ENCODE measurements at regions of chr2 and their contacts with region 1.

Region 1: DNA sequence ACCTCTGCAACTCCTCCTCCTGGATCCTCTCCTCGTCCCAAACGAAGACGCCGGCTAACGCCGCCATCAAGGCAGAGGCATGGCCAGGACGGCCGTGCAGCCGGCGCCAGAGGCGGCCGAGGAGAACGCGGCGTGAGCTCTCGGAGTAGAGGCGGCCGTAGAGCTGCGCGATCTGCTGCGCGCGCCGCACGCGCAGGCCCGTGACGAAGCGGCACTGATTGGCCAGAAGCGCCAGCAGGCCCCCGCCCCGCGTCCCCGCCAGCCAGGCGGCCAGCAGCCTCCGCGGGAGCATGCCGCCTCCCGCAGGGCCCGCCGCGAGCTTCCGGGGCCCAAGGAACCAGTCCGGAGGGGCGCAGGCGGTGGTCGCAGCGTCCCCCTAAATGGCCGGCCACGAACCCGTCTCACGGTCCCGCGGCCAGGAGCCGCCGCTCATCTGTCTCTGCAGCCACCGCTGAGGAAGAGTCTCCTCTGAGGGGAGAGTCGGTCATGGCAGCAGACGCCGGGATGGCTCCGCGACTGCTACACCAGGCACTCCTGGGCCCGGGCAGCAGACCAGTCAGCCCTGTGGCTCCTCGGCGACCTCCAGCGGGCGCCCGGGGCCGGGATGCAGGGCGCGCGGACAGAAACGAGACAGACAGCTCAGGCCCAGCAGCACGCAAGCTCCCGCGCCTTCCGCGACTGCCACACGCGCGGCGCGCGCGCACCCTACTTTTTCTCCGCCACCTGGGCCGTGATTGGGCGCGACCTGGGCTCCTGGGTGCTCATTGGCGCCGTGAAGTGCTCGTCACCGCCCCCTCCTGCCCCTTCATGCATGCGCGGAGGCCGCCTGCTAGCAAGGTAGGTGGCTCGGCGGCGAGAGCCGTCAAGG is at the start of gene STARD7:
- DNase-seq: peak; percentile 99
- ATAC-seq: peak; percentile 94
- H3K4me3 Mint-ChIP-seq: peak within 1 kb of the TSS; percentile 100
- H3K27ac Mint-ChIP-seq: peak within 1 kb of the TSS; percentile 96
- H3K4me1 Mint-ChIP-seq: peaks cover 45% of the 10 kb centered on the region
- H3K27me3 Mint-ChIP-seq: no peaks in the 10 kb centered on the region
- total RNA-seq, gene STARD7: 151 to 173 TPM

Region 2: DNA sequence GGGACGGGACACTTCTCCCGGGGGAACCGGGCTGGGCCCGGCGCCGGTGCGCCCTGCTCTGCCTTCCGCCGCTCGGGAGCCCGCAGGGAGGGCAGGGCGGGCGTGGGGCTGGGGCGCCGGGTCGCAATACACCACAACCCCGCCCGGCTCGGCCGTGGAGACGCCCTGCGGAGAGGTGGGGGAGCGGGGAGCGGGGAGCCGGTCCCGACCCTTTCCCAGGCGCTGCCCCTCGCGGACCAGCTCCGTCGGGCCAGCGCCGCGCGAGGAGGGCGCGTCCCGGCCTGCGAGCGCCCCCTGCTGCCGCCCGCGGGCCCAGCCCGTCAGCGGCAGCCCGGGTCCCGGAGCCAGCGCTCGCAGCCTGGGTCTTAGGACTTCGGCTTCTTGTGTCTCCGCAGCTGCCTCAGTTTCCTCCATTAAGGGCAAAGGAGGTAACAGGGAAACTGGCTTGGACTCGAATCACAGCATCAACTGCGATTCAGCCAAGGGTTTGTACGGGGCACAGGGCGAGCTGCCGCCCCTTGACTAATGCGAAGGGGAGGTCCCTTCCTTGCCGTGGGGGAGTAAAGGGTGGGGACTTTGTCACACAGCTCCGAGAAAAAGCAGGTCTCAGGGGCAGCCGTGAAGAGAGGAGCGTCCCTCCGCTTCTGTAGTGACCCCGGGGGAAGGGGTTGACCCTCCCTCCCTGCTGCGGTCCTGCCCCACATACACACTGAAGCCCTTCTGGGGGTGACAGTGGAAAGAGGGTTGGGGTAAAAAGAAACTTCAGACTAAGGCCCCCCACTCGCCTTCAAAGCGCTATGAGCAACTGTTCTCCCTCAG is 91.3 kb before region 1 on chr2:
- CTCF ChIA-PET with region 1: interaction called, 3 read pairs
- POLR2A ChIA-PET with region 1: interaction called, 3 read pairs
- intact Hi-C with region 1: loop called in 1 of 2 experiments (anchors 1 kb)
- DNase-seq: peak; percentile 80
- ATAC-seq: peak; percentile 87
- H3K4me3 Mint-ChIP-seq: peak overlapping the region; percentile 55
- H3K27ac Mint-ChIP-seq: no peak overlapping the region
- H3K4me1 Mint-ChIP-seq: peaks cover 10% of the 10 kb centered on the region
- H3K27me3 Mint-ChIP-seq: peaks cover 36% of the 10 kb centered on the region

Region 3: DNA sequence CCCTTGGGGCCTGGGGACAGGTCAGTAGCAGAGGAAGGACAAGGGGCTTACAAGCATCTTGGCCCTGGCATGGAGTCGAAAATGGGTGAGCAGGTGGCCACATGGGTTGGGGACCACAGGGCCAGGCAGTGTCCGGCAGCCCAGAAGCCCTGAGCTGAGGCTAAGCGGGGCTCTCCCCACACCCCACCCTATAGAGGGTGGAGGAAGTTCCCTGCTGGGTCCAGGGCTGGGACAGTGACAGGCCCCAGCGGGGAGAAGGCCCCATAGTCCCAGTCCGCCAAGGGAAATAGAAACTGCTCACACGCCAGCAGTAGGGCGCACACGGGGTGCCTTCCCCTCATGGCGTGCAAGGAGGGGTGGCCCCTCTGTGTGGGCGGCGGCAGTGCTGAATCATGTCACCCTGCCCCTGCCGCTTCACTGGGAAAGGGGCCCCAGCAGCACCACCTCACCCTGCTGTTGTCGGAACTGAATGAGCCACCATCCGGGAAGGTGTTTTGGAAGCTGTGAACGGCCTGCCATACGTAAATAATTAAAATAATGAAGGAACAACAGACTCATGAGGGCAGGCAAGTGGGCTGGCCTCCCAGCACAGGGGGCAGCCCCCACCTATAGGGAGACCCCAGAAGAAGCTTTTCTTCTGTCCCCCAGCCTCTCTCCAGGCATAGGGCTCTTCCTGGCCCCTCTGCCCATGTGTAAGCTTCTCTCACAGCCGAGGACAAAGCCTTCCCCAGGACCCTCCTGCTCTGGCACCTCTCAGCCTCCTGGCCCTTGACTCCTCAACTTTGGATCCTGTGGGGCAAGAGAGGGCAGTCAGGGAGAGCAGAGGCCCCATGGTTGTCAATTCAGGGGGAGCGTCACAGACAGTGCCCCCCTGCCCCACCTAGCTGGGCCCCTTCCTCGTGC is 50.5 kb before region 1 on chr2:
- CTCF ChIA-PET with region 1: no interaction called
- POLR2A ChIA-PET with region 1: no interaction called
- intact Hi-C with region 1: loop called in 1 of 2 experiments (anchors 1 kb)
- DNase-seq: peak; percentile 99
- ATAC-seq: peak; percentile 79
- H3K4me3 Mint-ChIP-seq: peak overlapping the region; percentile 61
- H3K27ac Mint-ChIP-seq: peak overlapping the region; percentile 98
- H3K4me1 Mint-ChIP-seq: peaks cover 90% of the 10 kb centered on the region
- H3K27me3 Mint-ChIP-seq: no peaks in the 10 kb centered on the region

Region 4: GRCh38 chr2:96241900-96242611 is 33.7 kb after region 1 on chr2:
- CTCF ChIA-PET with region 1: interaction called, 5 read pairs
- POLR2A ChIA-PET with region 1: no interaction called
- intact Hi-C with region 1: loop called in 1 of 2 experiments (anchors 1 kb)
- DNase-seq: peak; percentile 78
- ATAC-seq: peak; percentile 94
- H3K4me3 Mint-ChIP-seq: peak overlapping the region; percentile 13
- H3K27ac Mint-ChIP-seq: peak overlapping the region; percentile 91
- H3K4me1 Mint-ChIP-seq: peaks cover 45% of the 10 kb centered on the region
- H3K27me3 Mint-ChIP-seq: no peaks in the 10 kb centered on the region

Region 5: DNA sequence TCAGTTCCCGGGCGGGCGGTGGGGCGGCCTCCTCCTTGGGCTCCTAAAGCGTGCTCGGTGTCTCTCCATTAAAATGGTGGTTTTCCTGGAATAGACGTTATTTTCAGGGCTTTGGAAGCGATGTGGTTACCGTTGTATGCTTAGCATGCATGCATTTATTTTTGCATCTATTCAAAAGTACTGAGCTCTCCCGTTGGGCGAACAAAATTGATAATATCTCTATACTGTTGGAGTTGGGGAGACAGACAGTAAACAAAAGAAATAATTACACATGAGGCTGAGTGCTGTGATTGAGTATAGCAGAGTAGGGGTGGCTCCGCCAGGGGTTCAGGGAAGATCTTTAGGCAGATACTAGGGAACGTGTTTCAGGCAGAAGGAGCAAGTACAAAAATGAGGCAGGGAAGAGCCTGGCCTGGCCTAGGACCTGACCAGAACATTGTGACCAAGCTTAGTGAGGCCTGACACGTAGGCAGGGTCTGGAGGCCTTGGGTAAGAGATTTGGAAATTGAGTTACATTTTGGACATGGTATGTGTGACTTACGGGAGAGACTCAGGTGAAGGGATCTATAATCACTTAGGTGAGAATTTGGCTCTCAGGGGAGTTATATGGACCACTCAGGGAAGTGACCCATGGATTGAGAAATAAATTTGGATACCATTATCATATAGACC is 127.9 kb after region 1 on chr2:
- CTCF ChIA-PET with region 1: no interaction called
- POLR2A ChIA-PET with region 1: interaction called, 8 read pairs
- intact Hi-C with region 1: loop called in 1 of 2 experiments (anchors 1 kb)
- DNase-seq: no peak
- ATAC-seq: no peak
- H3K4me3 Mint-ChIP-seq: peak overlapping the region; percentile 88
- H3K27ac Mint-ChIP-seq: peak overlapping the region; percentile 85
- H3K4me1 Mint-ChIP-seq: peaks cover 47% of the 10 kb centered on the region
- H3K27me3 Mint-ChIP-seq: no peaks in the 10 kb centered on the region

Region 6: DNA sequence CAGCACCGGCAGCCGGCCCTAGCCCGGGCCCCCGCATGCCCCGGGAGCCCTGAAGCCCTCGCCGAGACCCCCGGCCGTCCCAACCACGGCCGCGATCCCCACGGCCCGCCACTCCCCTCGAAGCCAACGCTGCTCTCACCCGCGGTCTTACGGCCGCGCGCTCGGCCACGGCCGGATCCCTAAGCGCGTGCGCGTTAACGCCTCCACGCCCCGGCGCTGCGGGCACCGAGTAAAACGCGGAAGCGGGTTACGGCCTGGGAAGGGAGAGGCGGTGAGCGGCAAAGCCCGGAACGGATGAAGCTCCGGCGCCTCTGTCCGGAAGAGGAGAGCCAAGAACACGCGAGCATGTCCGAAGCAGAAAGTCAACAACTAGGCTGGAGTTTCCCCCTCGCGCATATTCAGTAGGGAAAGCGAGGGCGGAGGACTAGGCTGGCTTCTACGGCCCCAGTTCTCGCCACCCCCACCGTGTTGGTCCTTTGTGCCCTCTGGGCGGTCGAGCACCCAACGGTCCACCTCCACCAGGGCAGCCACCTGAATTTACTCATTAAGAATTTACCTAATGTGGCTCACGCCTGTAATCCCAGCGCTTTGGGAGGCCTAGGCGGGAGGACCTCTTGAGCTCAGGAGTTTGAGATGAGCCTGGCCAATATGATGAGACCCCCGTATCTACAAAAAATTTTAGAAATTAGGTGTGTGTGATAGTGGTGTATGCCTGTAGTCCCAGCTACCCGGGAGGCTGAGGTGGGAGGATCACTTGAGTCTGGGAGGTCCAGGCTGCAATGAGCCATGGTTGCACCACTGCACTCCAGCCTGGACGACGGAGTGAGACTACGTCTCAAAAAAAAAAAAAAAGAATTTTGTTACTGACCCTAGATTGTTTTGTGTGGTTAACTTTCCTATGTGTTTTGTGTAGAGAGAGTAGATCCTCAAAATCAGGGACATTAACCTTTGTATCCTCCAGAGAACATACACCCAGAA is 430.1 kb after region 1 on chr2 and contains the start of gene KANSL3:
- CTCF ChIA-PET with region 1: no interaction called
- POLR2A ChIA-PET with region 1: no interaction called
- intact Hi-C with region 1: loop called in 1 of 2 experiments (anchors 1 kb)
- DNase-seq: peak; percentile 94
- ATAC-seq: peak; percentile 86
- H3K4me3 Mint-ChIP-seq: peak within 1 kb of the TSS; percentile 91
- H3K27ac Mint-ChIP-seq: peak within 1 kb of the TSS; percentile 93
- H3K4me1 Mint-ChIP-seq: peaks cover 30% of the 10 kb centered on the region
- H3K27me3 Mint-ChIP-seq: no peaks in the 10 kb centered on the region
- total RNA-seq, gene KANSL3: 33.9 to 39.1 TPM

Region 7: DNA sequence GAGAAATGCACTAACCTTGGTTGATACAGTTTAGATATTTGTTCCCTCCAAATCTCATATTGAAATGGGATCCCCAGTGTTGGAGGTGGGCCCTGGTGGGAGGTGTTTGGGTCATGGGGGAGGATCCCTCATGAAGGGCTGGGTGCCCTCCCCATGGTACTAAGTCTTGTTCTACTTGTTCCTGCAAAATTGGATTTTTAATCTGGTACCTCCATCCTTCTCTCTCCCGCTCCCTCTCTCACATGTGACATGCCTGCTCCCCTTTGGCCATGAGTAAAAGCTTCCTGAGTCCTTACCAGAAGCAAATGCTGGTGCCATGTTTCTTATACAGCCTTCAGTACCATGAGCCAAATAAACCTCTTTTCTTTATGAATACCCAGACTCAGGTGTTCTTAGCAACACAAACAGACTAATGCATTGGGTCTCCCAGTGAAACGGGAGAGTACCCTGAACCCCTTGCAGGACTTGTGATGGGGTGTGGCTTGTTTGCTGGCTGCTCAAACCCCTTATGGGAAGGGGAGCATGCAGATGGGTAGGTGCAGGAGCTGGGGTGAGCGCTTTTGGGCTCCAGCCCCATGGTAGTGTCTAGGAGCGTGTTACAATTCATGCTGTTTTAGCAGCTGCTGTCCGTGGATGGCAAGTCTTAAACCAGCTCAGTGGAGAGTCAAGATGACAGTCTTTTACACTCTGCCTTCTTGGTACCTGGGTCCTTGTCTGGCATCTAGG is 859.1 kb after region 1 on chr2:
- CTCF ChIA-PET with region 1: no interaction called
- POLR2A ChIA-PET with region 1: no interaction called
- intact Hi-C with region 1: no loop called
- DNase-seq: no peak
- ATAC-seq: no peak
- H3K4me3 Mint-ChIP-seq: no peak overlapping the region
- H3K27ac Mint-ChIP-seq: no peak overlapping the region
- H3K4me1 Mint-ChIP-seq: no peaks in the 10 kb centered on the region
- H3K27me3 Mint-ChIP-seq: peaks cover 4% of the 10 kb centered on the region